ENCODE measurements at regions of chr1 and their contacts with region 1.

Region 1: DNA sequence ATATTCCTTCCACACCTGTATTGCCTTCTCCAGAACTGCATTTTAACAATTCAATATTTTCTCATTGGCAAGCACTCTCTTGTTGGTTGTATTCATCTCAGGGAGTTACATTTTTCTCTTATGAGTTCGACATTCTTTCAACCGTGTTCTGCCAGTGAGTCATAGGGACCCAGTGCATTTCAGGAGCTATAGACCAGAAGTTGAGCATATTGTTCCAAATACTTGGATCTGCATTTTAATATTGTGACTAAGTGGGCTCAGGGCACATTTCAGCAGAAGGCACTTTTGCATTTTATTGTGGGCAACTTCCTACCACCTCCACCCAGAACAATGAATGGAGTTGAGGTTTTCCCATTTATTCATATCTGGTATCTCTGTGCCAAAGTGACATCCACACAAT is 132.8 kb downstream of the TNFSF18 start:
- DNase-seq: peak; percentile 94
- H3K4me3 ChIP-seq: no peak overlapping the region
- H3K27ac ChIP-seq: peak overlapping the region; percentile 73
- H3K4me1 ChIP-seq: peaks cover 51% of the 10 kb centered on the region
- H3K27me3 ChIP-seq: no peaks in the 10 kb centered on the region
- CTCF ChIP-seq: no peak

Region 2: GRCh38 chr1:172837816-172838680 is 79.9 kb before region 1 on chr1:
- CTCF ChIA-PET with region 1: no interaction called
- dilution Hi-C with region 1: no loop called
- in situ Hi-C with region 1: no loop called
- intact Hi-C with region 1: loop called (anchors 5 kb)
- DNase-seq: peak; percentile 95
- H3K4me3 ChIP-seq: peak overlapping the region in 2 of 3 experiments; percentile 16 to 31
- H3K27ac ChIP-seq: peak overlapping the region; percentile 89
- H3K4me1 ChIP-seq: peaks cover 20% of the 10 kb centered on the region
- H3K27me3 ChIP-seq: no peaks in the 10 kb centered on the region
- CTCF ChIP-seq: no peak

Region 3: GRCh38 chr1:172969611-172970010 is 51.6 kb after region 1 on chr1:
- CTCF ChIA-PET with region 1: no interaction called
- dilution Hi-C with region 1: no loop called
- in situ Hi-C with region 1: no loop called
- intact Hi-C with region 1: loop called (anchors 5 kb)
- DNase-seq: peak; percentile 32
- H3K4me3 ChIP-seq: no peak overlapping the region
- H3K27ac ChIP-seq: peak overlapping the region; percentile 90
- H3K4me1 ChIP-seq: peaks cover 57% of the 10 kb centered on the region
- H3K27me3 ChIP-seq: no peaks in the 10 kb centered on the region
- CTCF ChIP-seq: no peak

Region 4: DNA sequence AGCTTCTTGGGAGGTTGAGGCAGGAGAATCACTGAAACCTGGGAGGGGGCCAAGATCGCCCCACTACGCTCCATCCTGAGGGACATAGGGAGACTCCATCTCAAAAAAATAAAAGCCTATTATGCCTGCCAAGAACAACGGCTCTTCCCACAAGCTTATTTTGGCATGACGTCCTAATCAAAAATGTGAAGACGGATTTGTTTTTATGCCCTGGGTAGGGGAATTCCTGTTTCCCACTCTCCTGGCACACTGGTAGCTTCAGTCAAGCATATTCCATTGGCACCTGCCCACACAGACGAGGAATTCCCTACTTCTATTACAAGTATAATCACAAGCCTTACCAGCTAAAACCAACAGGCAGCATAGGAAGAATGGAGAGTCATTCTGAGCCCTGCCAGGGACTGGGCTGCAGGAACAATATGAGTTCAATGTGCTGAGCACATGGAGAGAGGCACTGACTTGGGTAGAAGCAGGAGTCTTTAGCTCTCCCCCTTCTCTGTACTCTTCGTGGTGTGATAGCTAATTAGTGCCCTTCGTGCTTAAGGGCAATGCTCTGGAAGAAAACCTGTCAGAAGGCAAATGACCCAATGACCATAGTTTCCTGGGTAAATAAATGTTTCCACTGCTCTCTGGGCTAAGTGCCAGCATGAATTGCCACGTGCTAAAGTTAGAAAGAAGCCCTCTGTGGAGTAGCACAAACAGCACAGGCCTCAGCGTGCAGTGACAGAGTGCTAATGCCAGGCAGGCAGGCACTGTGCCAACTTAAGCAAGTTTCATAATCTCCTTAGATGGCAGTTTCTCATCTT is 272.3 kb after region 1 on chr1:
- CTCF ChIA-PET with region 1: no interaction called
- dilution Hi-C with region 1: no loop called
- in situ Hi-C with region 1: no loop called
- intact Hi-C with region 1: no loop called
- DNase-seq: peak; percentile 93
- H3K4me3 ChIP-seq: no peak overlapping the region
- H3K27ac ChIP-seq: peak overlapping the region; percentile 68
- H3K4me1 ChIP-seq: peaks cover 17% of the 10 kb centered on the region
- H3K27me3 ChIP-seq: no peaks in the 10 kb centered on the region
- CTCF ChIP-seq: no peak

Measured in mammary epithelial cell (primary cell).